Transverse colon (tissue), 4 donors: ENCODE measurements at regions of chr10 and their contacts with region 1.

Region 1: DNA sequence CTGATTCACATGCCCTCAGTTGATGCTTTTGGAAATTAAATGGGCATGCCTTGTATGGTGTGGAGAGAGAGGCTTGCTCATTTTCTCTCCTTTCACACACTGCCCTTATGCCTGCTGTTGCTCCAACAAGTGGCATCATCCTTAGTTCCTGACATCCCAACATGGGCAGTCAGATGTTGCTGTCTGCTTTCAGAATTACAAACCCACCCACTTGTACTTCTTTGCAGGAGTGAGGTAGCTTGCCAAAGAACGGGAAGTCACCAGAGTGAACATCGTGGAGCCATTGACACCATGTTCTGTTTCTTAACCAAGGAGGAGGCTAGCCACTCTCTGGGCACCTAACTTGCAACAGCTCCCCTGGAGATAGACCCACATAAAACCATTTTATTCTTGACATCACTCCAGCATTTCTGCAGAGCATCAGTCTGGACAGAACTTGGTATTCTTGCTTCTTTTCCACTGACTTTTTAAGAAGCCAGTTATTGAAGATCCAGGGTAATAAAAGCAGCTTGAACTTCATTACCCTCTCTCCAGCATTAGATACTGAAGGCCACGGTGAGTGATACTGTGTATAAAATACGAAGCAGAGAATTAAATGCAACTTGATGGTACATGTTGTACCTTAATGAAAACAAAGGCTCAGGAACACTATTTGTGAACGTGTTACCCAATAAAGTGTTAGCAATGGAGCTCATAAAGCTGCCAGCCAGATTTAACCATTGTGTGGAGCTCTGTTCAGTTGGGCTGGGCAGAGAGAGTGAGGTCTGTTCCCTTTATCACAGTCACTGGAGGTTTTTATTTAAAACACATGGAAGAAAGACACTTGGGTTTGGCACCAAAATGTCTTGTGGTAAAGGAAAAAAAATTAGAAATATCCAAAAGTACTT is 195.8 kb upstream of the HABP2 start:
- DNase-seq: no peak
- H3K4me3 ChIP-seq: no peak overlapping the region
- H3K27ac ChIP-seq: peak overlapping the region in 3 of 4 donors; percentile 5 to 77 (median 35)
- H3K4me1 ChIP-seq: peaks cover 0 to under 1% (median 0%) of the 10 kb centered on the region in 4 donors
- H3K27me3 ChIP-seq: no peaks in the 10 kb centered on the region
- CTCF ChIP-seq: no peak
- EP300 ChIP-seq: peak; percentile 58
- POLR2A ChIP-seq: no peak

Region 2: DNA sequence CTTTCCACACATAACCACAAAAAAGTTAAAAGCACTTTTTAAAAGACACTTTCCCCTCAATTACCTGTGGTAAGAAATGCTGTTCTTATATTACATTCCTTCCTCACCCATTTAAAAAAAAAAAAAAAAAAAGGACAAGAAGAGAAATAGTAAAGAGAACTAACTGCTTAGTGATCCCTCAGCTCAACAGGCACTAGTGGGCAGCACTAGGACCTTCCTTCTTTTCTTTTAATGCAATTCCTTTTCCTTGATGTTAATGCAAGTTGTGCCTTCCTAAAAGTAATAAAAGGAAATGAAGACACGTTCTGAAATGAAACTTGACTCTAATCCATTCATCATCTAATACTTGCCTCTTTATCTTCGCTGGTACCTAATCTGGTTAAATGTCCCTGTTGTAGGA is 217.3 kb before region 1 on chr10:
- in situ Hi-C with region 1: no loop called
- intact Hi-C with region 1: loop called (anchors 10 kb)
- DNase-seq: no peak
- H3K4me3 ChIP-seq: no peak overlapping the region
- H3K27ac ChIP-seq: peak overlapping the region in 2 of 4 donors; percentile 61 to 71
- H3K4me1 ChIP-seq: peaks cover 5 to 22% (median 10%) of the 10 kb centered on the region in 4 donors
- H3K27me3 ChIP-seq: no peaks in the 10 kb centered on the region
- CTCF ChIP-seq: no peak
- EP300 ChIP-seq: no peak
- POLR2A ChIP-seq: no peak

Region 3: DNA sequence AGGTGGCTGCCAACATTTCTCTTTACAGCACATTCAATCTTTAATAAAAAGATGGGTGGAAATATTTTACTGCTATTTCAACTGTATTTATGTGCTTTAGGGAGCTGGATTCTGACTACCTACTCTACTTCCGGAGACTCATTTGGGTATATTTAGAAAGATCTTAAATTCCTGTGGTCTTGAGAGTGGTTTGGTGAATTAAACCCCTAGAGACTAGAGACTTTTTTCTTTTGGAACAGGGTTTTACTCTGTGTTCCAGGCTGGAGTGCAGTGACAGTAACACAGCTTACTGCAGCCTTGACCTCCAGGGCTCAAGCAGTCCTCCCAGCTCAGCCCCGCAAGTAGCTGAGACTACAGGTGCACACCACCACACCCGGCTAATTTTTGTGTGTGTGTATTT is 116.8 kb after region 1 on chr10:
- in situ Hi-C with region 1: no loop called
- intact Hi-C with region 1: no loop called
- DNase-seq: no peak
- H3K4me3 ChIP-seq: no peak overlapping the region
- H3K27ac ChIP-seq: no peak overlapping the region
- H3K4me1 ChIP-seq: peaks cover 0 to 11% (median 0%) of the 10 kb centered on the region in 4 donors
- H3K27me3 ChIP-seq: no peaks in the 10 kb centered on the region
- CTCF ChIP-seq: no peak
- EP300 ChIP-seq: no peak
- POLR2A ChIP-seq: no peak